A549 (cell line): ENCODE measurements at regions of chr9 and their contacts with region 1.

Region 1: DNA sequence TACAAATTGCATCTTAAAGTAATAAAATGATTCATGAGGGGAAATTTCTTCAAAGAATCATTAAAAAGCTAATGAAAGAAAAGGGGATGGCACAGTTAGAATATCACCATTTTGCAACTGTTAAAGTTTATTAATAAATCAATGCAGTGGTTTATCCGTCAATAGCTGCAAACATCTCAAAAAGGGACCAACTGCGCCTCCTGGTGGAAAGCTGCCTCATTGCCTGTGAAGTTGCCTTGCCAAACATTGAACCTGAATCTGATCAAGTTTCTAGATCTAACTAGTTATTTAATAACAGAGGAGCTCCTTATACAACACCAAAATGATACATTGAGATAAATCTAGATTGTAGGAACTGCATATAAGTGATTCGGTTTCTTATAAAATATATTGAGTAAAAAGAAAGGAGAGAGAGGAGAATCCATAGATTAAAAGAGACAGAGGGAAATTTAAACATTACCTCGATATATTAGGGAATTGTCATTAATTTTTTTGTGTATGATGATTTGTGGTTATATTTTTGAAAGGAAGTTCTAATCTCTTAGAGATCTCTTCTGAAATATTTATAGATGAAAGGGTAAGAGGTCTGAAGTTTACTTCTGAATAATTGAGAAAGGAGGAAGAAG is 6.9 kb upstream of the NDUFB6 start:
- DNase-seq: peak; percentile 28 to 59
- ATAC-seq: peak; percentile 48 to 78; a peak in 3 of 6 replicates
- H3K4me3 ChIP-seq: no peak overlapping the region
- H3K27ac ChIP-seq: no peak overlapping the region
- H3K4me1 ChIP-seq: peaks cover 8% of the 10 kb centered on the region; the same call in 2 of the 3 replicates
- CTCF ChIP-seq: peak; percentile 97
- EP300 ChIP-seq: no peak
- POLR2A ChIP-seq: no peak
- RAD21 ChIP-seq: peak; percentile 76 to 80

Region 2: GRCh38 chr9:32384364-32385151 is 195.3 kb before region 1 on chr9 and contains the start of gene ACO1:
- CTCF ChIA-PET with region 1: interaction called, 507 read pairs
- POLR2A ChIA-PET with region 1: interaction called, 3 read pairs
- DNase-seq: peak; percentile 73 to 84
- ATAC-seq: peak; percentile 90 to 97
- H3K4me3 ChIP-seq: peak within 1 kb of the TSS; percentile 81
- H3K27ac ChIP-seq: peak within 1 kb of the TSS; percentile 62 to 89
- H3K4me1 ChIP-seq: peaks cover 5% of the 10 kb centered on the region; the same call in 1 of the 3 replicates
- CTCF ChIP-seq: no peak
- EP300 ChIP-seq: no peak
- POLR2A ChIP-seq: peak; percentile 85
- RAD21 ChIP-seq: peak in 1 of 2 experiments; percentile 18; a peak in 1 of 5 replicates
- polyA plus RNA-seq, gene ACO1: 40.2 and 41.0 TPM in 2 replicates

Region 3: GRCh38 chr9:32431940-32432555 is 147.8 kb before region 1 on chr9:
- CTCF ChIA-PET with region 1: interaction called, 13 read pairs
- POLR2A ChIA-PET with region 1: no interaction called
- DNase-seq: peak; percentile 17 to 25
- ATAC-seq: peak; percentile 77 to 88; a peak in 5 of 6 replicates
- H3K4me3 ChIP-seq: no peak overlapping the region
- H3K27ac ChIP-seq: no peak overlapping the region
- H3K4me1 ChIP-seq: peaks cover 7% of the 10 kb centered on the region
- CTCF ChIP-seq: peak; percentile 59
- EP300 ChIP-seq: no peak
- POLR2A ChIP-seq: no peak
- RAD21 ChIP-seq: peak; percentile 36 to 42; a peak in 3 of 5 replicates

Region 4: GRCh38 chr9:32566770-32567169 is 13.0 kb before region 1 on chr9:
- CTCF ChIA-PET with region 1: interaction called, 49 read pairs
- POLR2A ChIA-PET with region 1: no interaction called
- DNase-seq: no peak
- ATAC-seq: no peak
- H3K4me3 ChIP-seq: no peak overlapping the region
- H3K27ac ChIP-seq: no peak overlapping the region
- H3K4me1 ChIP-seq: peaks cover 10% of the 10 kb centered on the region
- CTCF ChIP-seq: no peak
- EP300 ChIP-seq: no peak
- POLR2A ChIP-seq: no peak
- RAD21 ChIP-seq: no peak

Region 5: GRCh38 chr9:32618261-32618660 is 38.4 kb after region 1 on chr9:
- CTCF ChIA-PET with region 1: interaction called, 11 read pairs
- POLR2A ChIA-PET with region 1: no interaction called
- DNase-seq: no peak
- ATAC-seq: peak in 1 of 2 experiments; percentile 43; a peak in 1 of 6 replicates
- H3K4me3 ChIP-seq: no peak overlapping the region
- H3K27ac ChIP-seq: no peak overlapping the region
- H3K4me1 ChIP-seq: no peaks in the 10 kb centered on the region
- CTCF ChIP-seq: no peak
- EP300 ChIP-seq: no peak
- POLR2A ChIP-seq: no peak
- RAD21 ChIP-seq: no peak

Region 6: GRCh38 chr9:32954642-32955041 is 374.8 kb after region 1 on chr9:
- CTCF ChIA-PET with region 1: interaction called, 14 read pairs
- POLR2A ChIA-PET with region 1: no interaction called
- DNase-seq: peak in 1 of 2 experiments; percentile 4
- ATAC-seq: no peak
- H3K4me3 ChIP-seq: no peak overlapping the region
- H3K27ac ChIP-seq: no peak overlapping the region
- H3K4me1 ChIP-seq: no peaks in the 10 kb centered on the region
- CTCF ChIP-seq: no peak
- EP300 ChIP-seq: no peak
- POLR2A ChIP-seq: no peak
- RAD21 ChIP-seq: no peak

Region 7: DNA sequence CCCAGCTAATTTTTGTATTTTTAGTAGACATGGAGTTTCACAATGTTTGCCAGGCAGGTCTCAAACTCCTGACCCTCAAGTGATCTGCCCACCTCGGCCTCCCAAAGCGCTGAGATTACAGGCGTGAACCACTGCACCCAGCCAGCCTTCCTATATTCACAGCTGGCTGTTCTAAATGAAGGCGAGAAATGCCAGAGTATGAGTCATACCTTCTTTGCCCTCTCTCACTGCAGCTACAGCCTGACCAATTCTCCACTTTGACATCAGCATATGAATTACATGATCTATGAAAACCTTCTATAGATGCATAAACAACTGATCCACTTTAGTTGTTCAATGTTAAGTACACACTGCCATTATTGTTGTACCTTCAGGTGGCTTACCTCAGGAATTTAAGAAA is 407.2 kb after region 1 on chr9:
- CTCF ChIA-PET with region 1: interaction called, 16 read pairs
- POLR2A ChIA-PET with region 1: no interaction called
- DNase-seq: no peak
- ATAC-seq: no peak
- H3K4me3 ChIP-seq: no peak overlapping the region
- H3K27ac ChIP-seq: no peak overlapping the region
- H3K4me1 ChIP-seq: no peaks in the 10 kb centered on the region
- CTCF ChIP-seq: no peak
- EP300 ChIP-seq: no peak
- POLR2A ChIP-seq: no peak
- RAD21 ChIP-seq: no peak